Endothelial cell of umbilical vein (primary cell): ENCODE measurements at regions of chr13 and their contacts with region 1.

Region 1: DNA sequence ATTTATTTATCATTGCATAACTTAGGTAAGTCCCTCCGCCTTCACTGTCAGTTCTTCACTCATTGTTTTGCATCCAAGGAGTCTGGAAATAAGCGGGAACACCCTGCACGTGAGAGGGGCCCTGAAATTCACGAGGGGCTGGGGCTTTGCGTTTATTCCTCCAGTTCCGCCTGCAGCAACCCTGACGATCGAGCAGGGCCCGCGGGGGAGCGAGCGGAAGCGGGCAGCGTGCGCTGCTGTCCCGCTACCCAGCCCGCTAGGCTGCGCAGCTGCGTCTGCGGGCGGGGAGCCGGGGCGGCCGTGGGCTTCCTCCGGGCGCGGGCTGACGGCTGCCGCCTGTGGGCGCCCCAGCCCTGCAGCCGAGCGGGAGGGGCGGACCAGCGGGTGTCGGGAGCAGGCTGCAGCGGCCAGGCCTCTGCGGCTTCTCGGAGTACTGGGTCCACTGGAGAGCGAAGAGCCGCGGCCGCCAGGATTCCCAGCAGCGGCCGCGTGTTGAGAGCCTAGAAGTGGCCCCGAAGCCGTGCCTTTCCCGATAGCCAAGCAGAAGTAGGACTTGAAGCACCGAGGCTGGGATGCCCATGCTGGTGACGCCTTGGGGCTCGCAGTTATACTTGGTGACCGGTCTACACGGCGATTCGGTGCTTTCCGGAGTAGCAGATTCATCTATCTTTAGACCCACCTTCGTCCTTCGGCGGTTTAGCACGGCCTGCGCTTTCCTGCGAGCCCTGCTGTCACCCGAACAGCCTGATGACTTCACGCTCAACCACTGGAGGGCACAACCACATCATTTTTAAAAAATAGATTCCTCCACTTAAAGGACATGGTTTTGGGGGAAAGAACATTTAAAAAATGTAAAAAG is 32.9 kb upstream of the SACS start:
- DNase-seq: peak; percentile 77
- H3K4me3 ChIP-seq: peak overlapping the region; percentile 5 to 57 (median 40)
- H3K27ac ChIP-seq: no peak overlapping the region
- H3K4me1 ChIP-seq: peaks cover 7% of the 10 kb centered on the region
- H3K27me3 ChIP-seq: peaks cover 6 to 13% of the 10 kb centered on the region in 2 experiments
- CTCF ChIP-seq: peak; percentile 46 to 48
- POLR2A ChIP-seq: no peak

Region 2: GRCh38 chr13:23547000-23547590 is 80.7 kb after region 1 on chr13:
- CTCF ChIA-PET with region 1: no interaction called
- POLR2A ChIA-PET with region 1: no interaction called
- dilution Hi-C with region 1: no loop called
- intact Hi-C with region 1: no loop called
- DNase-seq: peak; percentile 12
- H3K4me3 ChIP-seq: peak overlapping the region in 2 of 3 experiments; percentile 40 to 41
- H3K27ac ChIP-seq: no peak overlapping the region
- H3K4me1 ChIP-seq: no peaks in the 10 kb centered on the region
- H3K27me3 ChIP-seq: peaks cover 16 to 26% of the 10 kb centered on the region in 2 experiments
- CTCF ChIP-seq: no peak
- POLR2A ChIP-seq: no peak

Region 3: GRCh38 chr13:23707674-23708073 is 241.3 kb after region 1 on chr13:
- CTCF ChIA-PET with region 1: interaction called, 34 read pairs
- POLR2A ChIA-PET with region 1: no interaction called
- dilution Hi-C with region 1: no loop called
- intact Hi-C with region 1: loop called (anchors 1 kb)
- DNase-seq: peak; percentile 23
- H3K4me3 ChIP-seq: no peak overlapping the region
- H3K27ac ChIP-seq: no peak overlapping the region
- H3K4me1 ChIP-seq: no peaks in the 10 kb centered on the region
- H3K27me3 ChIP-seq: no peaks in the 10 kb centered on the region
- CTCF ChIP-seq: peak in 1 of 2 donors; percentile 17
- POLR2A ChIP-seq: no peak

Region 4: GRCh38 chr13:23888658-23889614 is 422.6 kb after region 1 on chr13 and contains the start of gene MIPEP:
- CTCF ChIA-PET with region 1: interaction called, 4 read pairs
- POLR2A ChIA-PET with region 1: no interaction called
- dilution Hi-C with region 1: no loop called
- intact Hi-C with region 1: loop called (anchors 1 kb)
- DNase-seq: peak; percentile 97
- H3K4me3 ChIP-seq: peak within 1 kb of the TSS; percentile 61 to 69 (median 61)
- H3K27ac ChIP-seq: peak within 1 kb of the TSS; percentile 50
- H3K4me1 ChIP-seq: peaks cover 10% of the 10 kb centered on the region
- H3K27me3 ChIP-seq: no peaks in the 10 kb centered on the region
- CTCF ChIP-seq: peak; percentile 78 to 84
- POLR2A ChIP-seq: no peak
- total RNA-seq, gene MIPEP: 16.2 and 19.2 TPM in 2 replicates

Region 5: GRCh38 chr13:23960566-23961156 is 494.3 kb after region 1 on chr13:
- CTCF ChIA-PET with region 1: interaction called, 12 read pairs
- POLR2A ChIA-PET with region 1: no interaction called
- dilution Hi-C with region 1: no loop called
- intact Hi-C with region 1: loop called (anchors 1 kb)
- DNase-seq: peak; percentile 52
- H3K4me3 ChIP-seq: no peak overlapping the region
- H3K27ac ChIP-seq: no peak overlapping the region
- H3K4me1 ChIP-seq: no peaks in the 10 kb centered on the region
- H3K27me3 ChIP-seq: peaks cover 0 to 2% of the 10 kb centered on the region in 2 experiments
- CTCF ChIP-seq: peak; percentile 51 to 67
- POLR2A ChIP-seq: no peak